Activated B cell treated with CpG ODN at 0.5 μM for 24 hours (primary cell): ENCODE measurements at regions of chr19 and their contacts with region 1.

Region 1: DNA sequence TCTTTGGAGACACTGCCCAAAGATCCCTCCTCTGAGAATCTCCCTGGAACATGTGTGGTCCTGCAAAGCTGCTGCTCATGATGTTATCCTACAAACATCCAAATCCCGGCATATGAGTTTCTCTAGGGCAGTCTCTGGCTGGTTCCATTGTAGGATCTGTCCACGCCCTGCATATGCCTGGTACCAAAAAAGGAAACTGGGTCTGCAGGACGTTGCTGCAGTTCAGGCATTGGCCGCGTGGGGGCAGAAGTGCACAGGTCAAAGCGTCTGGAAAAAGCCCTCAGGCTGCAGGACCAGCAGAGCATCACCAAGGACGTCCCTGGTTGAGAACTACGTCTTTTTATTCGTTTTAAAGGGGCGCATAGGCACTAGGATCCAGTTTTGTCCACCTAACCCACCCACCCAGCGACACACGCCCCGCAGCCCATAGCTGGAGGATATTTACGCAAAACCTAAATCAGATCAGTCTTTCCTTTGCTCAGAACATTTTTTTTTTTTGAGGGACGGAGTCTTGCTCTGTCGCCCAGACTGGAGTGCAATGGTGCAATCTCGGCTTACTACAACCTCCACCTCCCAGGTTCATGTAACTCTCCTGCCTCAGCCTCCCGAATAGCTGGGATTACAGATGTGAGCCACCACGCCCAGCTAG is 12.9 kb upstream of the ZNF564 start:
- DNase-seq: peak; percentile 91
- ATAC-seq: peak; percentile 100
- H3K4me3 Mint-ChIP-seq: no peak overlapping the region
- H3K27ac Mint-ChIP-seq: no peak overlapping the region
- H3K4me1 Mint-ChIP-seq: peaks cover 6% of the 10 kb centered on the region
- H3K27me3 Mint-ChIP-seq: no peaks in the 10 kb centered on the region
- CTCF ChIP-seq: no peak

Region 2: GRCh38 chr19:12202250-12202649 is 361.9 kb before region 1 on chr19:
- CTCF ChIA-PET with region 1: no interaction called
- POLR2A ChIA-PET with region 1: no interaction called
- intact Hi-C with region 1: loop called (anchors 1 kb)
- DNase-seq: peak; percentile 33
- ATAC-seq: peak; percentile 71
- H3K4me3 Mint-ChIP-seq: no peak overlapping the region
- H3K27ac Mint-ChIP-seq: no peak overlapping the region
- H3K4me1 Mint-ChIP-seq: peaks cover 6% of the 10 kb centered on the region
- H3K27me3 Mint-ChIP-seq: no peaks in the 10 kb centered on the region
- CTCF ChIP-seq: no peak

Region 3: DNA sequence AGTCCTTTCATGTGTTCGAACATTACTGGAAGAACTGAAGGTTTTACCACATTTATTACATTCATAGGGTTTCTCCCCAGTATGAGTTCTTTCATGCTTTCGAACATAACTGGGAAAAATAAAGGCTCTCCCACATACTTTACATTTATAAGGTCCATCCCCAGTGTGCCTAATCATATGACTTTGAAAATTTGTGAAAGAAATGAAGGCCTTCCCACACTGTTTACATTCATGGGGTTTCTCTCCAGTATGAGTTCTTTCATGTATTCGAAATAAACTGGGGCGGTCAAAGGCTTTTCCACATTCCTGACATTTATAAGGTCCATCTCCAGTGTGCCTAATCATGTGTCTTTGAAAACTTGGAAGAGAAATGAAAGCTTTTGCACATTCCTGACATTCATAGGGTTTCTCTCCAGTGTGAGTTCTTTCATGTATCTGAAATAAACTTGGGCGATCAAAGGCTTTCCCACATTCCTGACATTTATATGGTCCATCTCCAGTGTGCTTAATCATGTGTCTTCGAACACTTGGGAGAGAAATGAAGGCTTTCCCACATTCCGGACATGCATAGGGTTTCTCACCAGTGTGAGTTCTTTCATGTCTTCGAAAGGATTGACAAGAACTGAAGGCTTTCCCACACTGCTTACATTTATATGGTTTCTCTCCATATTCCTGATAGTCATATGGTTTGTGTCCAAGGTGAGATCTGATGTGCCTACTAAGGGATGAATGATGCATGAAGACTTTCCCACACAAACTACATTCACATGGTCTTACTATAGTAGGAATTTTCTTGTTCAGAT is 36.9 kb before region 1 on chr19:
- CTCF ChIA-PET with region 1: no interaction called
- POLR2A ChIA-PET with region 1: no interaction called
- intact Hi-C with region 1: no loop called
- DNase-seq: no peak
- ATAC-seq: no peak
- H3K4me3 Mint-ChIP-seq: no peak overlapping the region
- H3K27ac Mint-ChIP-seq: no peak overlapping the region
- H3K4me1 Mint-ChIP-seq: no peaks in the 10 kb centered on the region
- H3K27me3 Mint-ChIP-seq: no peaks in the 10 kb centered on the region
- CTCF ChIP-seq: no peak

Region 4: DNA sequence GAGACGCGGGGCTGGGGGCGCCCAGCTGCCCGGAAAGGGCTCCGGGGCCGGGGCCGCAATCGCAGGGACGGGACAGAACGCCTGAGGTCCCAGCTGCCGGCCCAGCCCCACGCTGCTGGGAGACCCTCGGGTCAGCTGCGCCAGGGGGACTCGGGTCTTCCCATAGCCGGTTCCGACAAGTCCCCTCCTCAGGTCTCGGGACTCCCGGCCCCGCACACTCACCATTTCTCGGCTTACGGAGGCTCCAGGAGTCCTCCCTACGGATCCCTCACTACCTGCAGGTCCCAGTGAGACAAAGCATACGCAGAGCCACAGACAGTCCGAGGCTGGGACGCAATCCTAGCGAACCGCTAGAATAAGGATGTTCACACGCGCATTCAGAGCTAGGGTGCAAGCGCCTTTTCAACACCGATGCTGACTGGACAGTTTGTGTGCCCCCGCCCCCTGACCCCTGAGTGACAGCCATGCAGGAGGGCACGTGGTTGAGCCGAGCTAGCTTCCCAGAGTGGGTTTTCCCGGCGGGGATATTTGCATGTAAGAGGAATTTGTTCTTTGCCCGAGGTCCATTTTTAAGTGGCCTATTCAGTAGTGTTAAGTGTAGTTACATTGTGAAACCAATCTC is 32.9 kb after region 1 on chr19:
- CTCF ChIA-PET with region 1: no interaction called
- POLR2A ChIA-PET with region 1: no interaction called
- intact Hi-C with region 1: no loop called
- DNase-seq: no peak
- ATAC-seq: no peak
- H3K4me3 Mint-ChIP-seq: no peak overlapping the region
- H3K27ac Mint-ChIP-seq: no peak overlapping the region
- H3K4me1 Mint-ChIP-seq: no peaks in the 10 kb centered on the region
- H3K27me3 Mint-ChIP-seq: no peaks in the 10 kb centered on the region
- CTCF ChIP-seq: no peak

Region 5: GRCh38 chr19:12639901-12640613 is 75.9 kb after region 1 on chr19:
- CTCF ChIA-PET with region 1: interaction called, 9 read pairs
- POLR2A ChIA-PET with region 1: interaction called, 3 read pairs
- intact Hi-C with region 1: loop called (anchors 1 kb)
- DNase-seq: peak; percentile 75
- ATAC-seq: peak; percentile 95
- H3K4me3 Mint-ChIP-seq: peak overlapping the region; percentile 79
- H3K27ac Mint-ChIP-seq: peak overlapping the region; percentile 46
- H3K4me1 Mint-ChIP-seq: peaks cover 23% of the 10 kb centered on the region
- H3K27me3 Mint-ChIP-seq: no peaks in the 10 kb centered on the region
- CTCF ChIP-seq: no peak

Region 6: DNA sequence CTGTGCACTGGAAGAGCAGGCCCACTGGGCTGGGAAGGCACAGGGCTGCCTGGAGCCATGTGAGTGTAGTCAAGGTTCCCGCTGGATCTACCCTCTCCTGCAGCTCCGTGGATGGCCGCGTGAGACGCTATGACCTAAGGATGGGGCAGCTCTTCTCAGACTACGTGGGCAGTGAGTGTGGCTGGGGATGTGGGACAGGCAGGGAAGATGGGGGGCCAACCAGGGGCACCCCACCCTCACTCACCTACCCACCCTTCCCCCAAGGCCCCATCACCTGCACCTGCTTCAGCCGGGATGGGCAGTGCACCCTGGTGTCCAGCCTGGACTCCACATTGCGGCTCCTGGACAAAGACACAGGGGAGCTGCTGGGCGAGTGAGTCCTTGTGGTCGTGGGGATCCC is 108.6 kb after region 1 on chr19:
- CTCF ChIA-PET with region 1: interaction called, 67 read pairs
- POLR2A ChIA-PET with region 1: interaction called, 7 read pairs
- intact Hi-C with region 1: loop called (anchors 1 kb)
- DNase-seq: no peak
- ATAC-seq: no peak
- H3K4me3 Mint-ChIP-seq: no peak overlapping the region
- H3K27ac Mint-ChIP-seq: no peak overlapping the region
- H3K4me1 Mint-ChIP-seq: peaks cover 44% of the 10 kb centered on the region
- H3K27me3 Mint-ChIP-seq: no peaks in the 10 kb centered on the region
- CTCF ChIP-seq: no peak

Region 7: GRCh38 chr19:12796146-12797071 is 232.3 kb after region 1 on chr19:
- CTCF ChIA-PET with region 1: no interaction called
- POLR2A ChIA-PET with region 1: no interaction called
- intact Hi-C with region 1: loop called (anchors 1 kb)
- DNase-seq: peak; percentile 63
- ATAC-seq: no peak
- H3K4me3 Mint-ChIP-seq: peak overlapping the region; percentile 81
- H3K27ac Mint-ChIP-seq: peak overlapping the region; percentile 80
- H3K4me1 Mint-ChIP-seq: peaks cover 34% of the 10 kb centered on the region
- H3K27me3 Mint-ChIP-seq: no peaks in the 10 kb centered on the region
- CTCF ChIP-seq: peak; percentile 37